ENCODE measurements at regions of chr3 and their contacts with region 1.

Region 1: GRCh38 chr3:153232910-153233271 is 70.9 kb downstream of the RAP2B start:
- DNase-seq: no peak
- H3K4me3 Mint-ChIP-seq: no peak overlapping the region
- H3K27ac Mint-ChIP-seq: no peak overlapping the region
- H3K4me1 Mint-ChIP-seq: peaks cover 14% of the 10 kb centered on the region
- H3K27me3 Mint-ChIP-seq: no peaks in the 10 kb centered on the region

Region 2: GRCh38 chr3:153246806-153247205 is 13.9 kb after region 1 on chr3:
- CTCF ChIA-PET with region 1: no interaction called
- intact Hi-C with region 1: loop called (anchors 2 kb)
- DNase-seq: no peak
- H3K4me3 Mint-ChIP-seq: no peak overlapping the region
- H3K27ac Mint-ChIP-seq: no peak overlapping the region
- H3K4me1 Mint-ChIP-seq: peaks cover 29% of the 10 kb centered on the region
- H3K27me3 Mint-ChIP-seq: no peaks in the 10 kb centered on the region

Region 3: GRCh38 chr3:153257673-153258351 is 24.9 kb after region 1 on chr3:
- CTCF ChIA-PET with region 1: no interaction called
- intact Hi-C with region 1: no loop called
- DNase-seq: no peak
- H3K4me3 Mint-ChIP-seq: no peak overlapping the region
- H3K27ac Mint-ChIP-seq: no peak overlapping the region
- H3K4me1 Mint-ChIP-seq: peaks cover 13% of the 10 kb centered on the region
- H3K27me3 Mint-ChIP-seq: no peaks in the 10 kb centered on the region